ENCODE measurements at regions of chr9 and their contacts with region 1.

Region 1: DNA sequence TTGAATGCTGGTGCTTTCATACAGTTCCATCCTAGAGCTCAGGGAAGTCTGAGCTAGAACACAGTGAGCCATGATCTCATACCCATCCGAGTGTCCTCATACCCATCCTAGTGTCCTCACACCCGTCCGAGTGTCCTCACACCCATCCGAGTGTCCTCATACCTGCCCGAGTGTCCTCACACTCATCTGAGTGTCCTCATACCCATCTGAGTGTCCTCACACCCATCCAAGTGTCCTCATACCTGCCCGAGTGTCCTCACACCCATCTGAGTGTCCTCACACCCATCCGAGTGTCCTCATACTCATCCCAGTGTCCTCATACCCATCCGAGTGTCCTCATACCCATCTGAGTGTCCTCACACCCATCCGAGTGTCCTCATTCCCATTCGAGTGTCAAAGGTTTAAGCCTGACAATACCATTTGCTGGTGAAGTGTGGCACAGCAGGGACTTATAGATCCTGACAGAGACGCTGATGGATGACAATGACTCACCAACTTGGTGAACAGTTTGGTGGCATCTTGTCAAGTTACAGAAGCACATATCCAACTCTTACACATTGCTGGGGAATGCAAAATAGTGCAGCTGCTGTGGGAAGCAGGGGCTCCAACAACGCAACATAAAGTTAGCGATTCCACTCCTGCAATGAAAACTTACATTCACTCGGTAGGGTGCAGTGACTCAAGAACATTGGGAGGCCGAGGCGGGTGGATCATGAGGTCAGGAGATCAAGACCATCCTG is 77.0 kb upstream of the COL5A1 start:
- DNase-seq: peak; percentile 42

Region 2: DNA sequence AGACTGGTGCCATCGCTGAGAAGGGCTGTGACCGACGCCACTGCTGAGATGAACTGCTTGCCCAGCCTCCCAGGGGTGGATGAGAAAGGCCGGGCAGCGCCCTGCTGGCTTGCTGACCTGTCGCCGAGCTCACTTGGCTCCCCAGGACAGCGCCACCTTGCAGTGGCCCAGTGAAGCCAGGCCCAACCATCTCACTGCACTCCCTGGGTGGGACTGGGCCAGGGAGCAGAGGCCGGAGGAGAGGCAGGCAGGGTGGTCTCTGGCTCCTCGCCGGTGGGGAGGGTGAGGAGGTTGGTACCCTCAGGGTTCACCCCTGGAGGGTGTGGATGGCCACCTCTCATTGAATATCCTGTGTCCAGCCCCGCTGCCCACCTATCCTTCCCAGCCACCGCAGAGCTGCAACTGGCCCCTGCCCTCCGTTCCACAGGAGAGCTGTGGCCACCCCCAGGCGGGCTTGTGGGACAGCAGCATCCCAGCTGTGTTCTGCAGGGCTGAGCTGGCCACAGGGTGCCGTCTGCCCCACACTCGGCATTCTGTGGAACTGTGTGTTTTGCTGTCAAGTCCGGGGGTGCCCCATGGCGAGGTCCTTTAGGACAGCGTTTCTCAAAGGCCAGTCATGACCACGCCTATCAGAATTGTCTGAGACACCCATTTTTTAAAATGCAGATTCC is 275.0 kb after region 1 on chr9:
- intact Hi-C with region 1: no loop called
- DNase-seq: no peak

Region 3: DNA sequence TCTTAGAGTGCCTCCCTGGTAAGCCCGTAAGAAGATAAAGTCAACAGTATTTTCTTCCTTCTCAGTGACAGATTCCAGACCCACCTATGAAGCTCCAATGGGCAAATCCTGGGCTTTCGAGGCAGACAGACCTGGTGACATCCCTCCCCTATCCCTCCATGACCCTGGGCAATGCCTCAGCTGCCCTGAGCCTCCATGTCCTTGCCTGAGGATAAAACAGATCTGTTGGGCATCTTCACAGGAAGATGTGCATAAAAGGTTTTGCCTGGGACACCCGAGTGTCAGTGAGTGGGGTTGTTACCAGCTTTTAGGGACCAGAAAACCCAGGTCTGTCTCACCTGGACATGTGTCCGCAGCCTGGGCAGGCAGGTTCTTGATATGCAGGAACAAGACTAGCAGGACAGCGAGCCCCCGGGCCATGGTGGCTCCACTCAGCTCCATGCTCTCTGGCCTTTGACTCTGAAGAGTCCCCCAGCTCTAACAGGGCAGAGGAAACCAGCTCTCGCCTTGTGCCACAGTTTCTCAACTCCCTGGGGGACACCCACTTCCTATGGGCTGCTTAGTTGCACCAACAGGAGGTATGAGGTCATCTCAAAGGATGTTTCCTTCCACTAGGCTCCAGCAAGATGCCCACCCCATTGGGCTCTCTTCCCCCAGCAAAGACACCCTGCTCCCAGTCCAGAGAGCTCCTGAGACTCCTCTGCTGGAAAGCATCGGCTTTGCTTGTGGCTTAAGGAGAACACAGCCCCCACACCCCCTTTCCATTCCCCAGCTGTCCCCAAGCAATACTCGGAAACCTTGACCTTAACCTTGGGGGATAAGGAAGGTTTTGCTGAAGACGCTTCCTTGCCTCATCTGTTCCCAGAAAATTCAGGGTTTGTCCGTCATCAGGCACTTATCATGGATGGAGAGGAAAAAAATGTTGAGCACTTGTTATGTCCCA is 353.1 kb after region 1 on chr9 and contains the start of gene FCN1:
- intact Hi-C with region 1: loop called in 1 of 2 experiments (anchors 5 kb)
- DNase-seq: no peak
- total RNA-seq, gene FCN1: 7.1 to 16.5 TPM

Measured in posterior vena cava (tissue), 2 donors.